ENCODE measurements at regions of chr6 and their contacts with region 1.

Region 1: GRCh38 chr6:149316798-149317655 is 485 bp upstream of the TAB2 start:
- DNase-seq: peak; percentile 36 to 92
- ATAC-seq: peak; percentile 90 to 94
- H3K4me3 ChIP-seq: peak overlapping the region; percentile 92
- H3K27ac ChIP-seq: peak overlapping the region; percentile 98 to 100
- H3K4me1 ChIP-seq: peaks cover 28% of the 10 kb centered on the region
- CTCF ChIP-seq: 0 out of 3 replicates have a peak, but pooled peaks have one; percentile 5
- EP300 ChIP-seq: no peak
- POLR2A ChIP-seq: peak; percentile 55
- RAD21 ChIP-seq: peak in 1 of 2 experiments; percentile 18; a peak in 2 of 5 replicates

Region 2: DNA sequence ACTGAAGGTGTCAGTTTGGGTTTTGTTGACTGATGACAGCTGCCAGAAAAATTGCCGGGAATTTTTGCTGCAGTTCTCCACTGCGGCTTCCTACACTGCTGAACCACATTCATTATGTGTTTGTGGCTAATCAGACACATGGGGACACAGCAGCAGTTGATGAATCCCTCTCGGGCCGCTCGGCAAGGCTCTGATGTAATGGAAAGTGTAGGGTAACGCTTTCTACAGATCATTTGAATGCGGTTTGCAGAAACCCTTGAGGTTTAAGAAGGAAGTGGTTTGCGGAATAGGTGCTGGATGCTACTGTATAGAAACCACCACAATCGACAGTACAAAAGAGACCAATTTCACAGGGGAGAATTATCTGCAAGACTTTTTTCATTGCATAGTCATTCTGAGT is 1113.1 kb before region 1 on chr6:
- CTCF ChIA-PET with region 1: no interaction called
- POLR2A ChIA-PET with region 1: no interaction called
- DNase-seq: no peak
- ATAC-seq: no peak
- H3K4me3 ChIP-seq: no peak overlapping the region
- H3K27ac ChIP-seq: no peak overlapping the region
- H3K4me1 ChIP-seq: no peaks in the 10 kb centered on the region
- CTCF ChIP-seq: no peak
- EP300 ChIP-seq: no peak
- POLR2A ChIP-seq: no peak
- RAD21 ChIP-seq: no peak

Region 3: DNA sequence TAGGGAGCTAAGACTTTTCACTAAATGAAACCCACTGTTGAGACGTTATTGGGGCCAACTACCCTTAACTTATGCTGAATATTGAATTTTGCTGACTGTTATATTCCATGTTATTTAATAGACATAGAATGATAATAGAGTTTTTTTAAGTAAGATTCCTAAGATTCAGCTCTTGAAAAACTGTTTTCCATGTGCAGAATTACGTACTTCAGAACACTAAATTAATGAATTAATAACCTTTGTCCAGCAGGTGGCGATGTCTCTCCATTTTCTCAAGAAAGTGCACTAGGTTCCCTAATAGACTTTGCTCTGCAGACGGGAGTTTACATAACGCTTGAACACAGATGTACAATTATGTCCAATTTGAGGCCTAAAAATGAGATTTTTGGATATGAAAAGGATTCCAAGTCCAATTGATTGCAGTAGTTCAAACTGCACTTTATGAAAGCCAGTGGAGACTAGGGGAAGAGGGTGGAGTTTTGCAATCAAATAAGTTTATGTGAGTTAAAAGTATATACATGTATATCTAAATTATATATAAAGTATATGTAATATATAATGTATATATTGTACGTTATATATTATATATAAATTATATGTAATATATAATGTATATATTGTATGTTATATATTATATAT is 288.1 kb before region 1 on chr6:
- CTCF ChIA-PET with region 1: interaction called, 4 read pairs
- POLR2A ChIA-PET with region 1: interaction called, 20 read pairs
- DNase-seq: peak; percentile 32 to 88
- ATAC-seq: no peak
- H3K4me3 ChIP-seq: no peak overlapping the region
- H3K27ac ChIP-seq: peak overlapping the region in 1 of 2 experiments; percentile 62; a peak in 2 of 6 replicates
- H3K4me1 ChIP-seq: peaks cover 35% of the 10 kb centered on the region
- CTCF ChIP-seq: peak; percentile 77
- EP300 ChIP-seq: no peak
- POLR2A ChIP-seq: no peak
- RAD21 ChIP-seq: peak; percentile 90 to 91

Region 4: GRCh38 chr6:149237464-149237863 is 79.6 kb before region 1 on chr6:
- CTCF ChIA-PET with region 1: no interaction called
- POLR2A ChIA-PET with region 1: no interaction called
- DNase-seq: no peak
- ATAC-seq: no peak
- H3K4me3 ChIP-seq: no peak overlapping the region
- H3K27ac ChIP-seq: no peak overlapping the region
- H3K4me1 ChIP-seq: peaks cover 30% of the 10 kb centered on the region
- CTCF ChIP-seq: no peak
- EP300 ChIP-seq: no peak
- POLR2A ChIP-seq: no peak
- RAD21 ChIP-seq: no peak

Measured in A549 (cell line).